ENCODE measurements at regions of chr19 and their contacts with region 1.

Region 1: DNA sequence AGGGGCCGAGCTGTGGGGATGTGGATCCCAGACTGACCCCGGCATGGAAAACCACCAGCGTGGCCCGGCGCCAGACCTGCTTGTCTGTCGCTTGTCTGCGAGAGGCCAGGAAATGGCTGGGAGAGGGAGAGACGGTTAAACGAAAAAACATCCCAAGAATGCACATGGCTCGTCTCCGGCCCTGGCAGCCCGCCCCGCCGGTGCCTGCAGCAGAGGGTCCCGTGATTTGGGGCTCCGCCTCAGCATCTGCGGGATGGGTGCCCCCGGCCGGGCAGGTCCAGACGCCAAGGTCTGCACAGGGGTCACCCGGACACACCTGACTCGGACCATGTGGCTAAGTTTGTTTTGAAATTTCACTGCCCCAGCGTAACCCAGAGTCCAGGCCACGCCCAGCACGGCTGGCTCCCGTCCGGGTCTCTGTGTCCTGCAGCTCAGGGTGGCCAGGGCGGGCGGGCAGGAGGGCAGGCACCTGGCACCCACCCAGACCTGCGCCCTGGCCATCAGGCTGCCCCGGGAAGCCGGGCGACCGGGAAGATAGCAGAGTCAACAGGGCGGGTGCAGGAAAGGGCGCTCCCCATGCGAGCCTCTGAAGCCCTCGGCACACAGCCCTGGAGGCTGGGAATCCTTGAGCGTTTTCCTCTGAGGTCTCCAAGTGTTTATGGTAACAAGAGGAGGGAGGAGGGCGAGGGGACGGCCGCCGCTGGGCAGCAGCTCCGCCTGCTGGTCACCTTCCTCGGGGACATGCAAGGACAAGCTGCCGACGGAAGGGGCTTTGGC is 103.2 kb downstream of the GADD45B start:
- DNase-seq: peak; percentile 90
- H3K4me3 ChIP-seq: peak overlapping the region; percentile 46 to 75
- H3K27ac ChIP-seq: peak overlapping the region; percentile 74 to 86
- H3K4me1 ChIP-seq: peaks cover 7 to 12% of the 10 kb centered on the region in 2 experiments; a peak in 3 of 4 replicates
- H3K27me3 ChIP-seq: no peaks in the 10 kb centered on the region
- CTCF ChIP-seq: peak; percentile 90
- EP300 ChIP-seq: peak in 1 of 2 experiments; percentile 85; a peak in 2 of 4 replicates
- RAD21 ChIP-seq: peak; percentile 84

Region 2: GRCh38 chr19:2261438-2262172 is 317.5 kb before region 1 on chr19:
- CTCF ChIA-PET with region 1: no interaction called
- POLR2A ChIA-PET with region 1: no interaction called
- DNase-seq: peak; percentile 49
- H3K4me3 ChIP-seq: no peak overlapping the region; a peak in 1 of 4 replicates
- H3K27ac ChIP-seq: no peak overlapping the region
- H3K4me1 ChIP-seq: peaks cover 0 to 3% of the 10 kb centered on the region in 2 experiments; a peak in 1 of 4 replicates
- H3K27me3 ChIP-seq: no peaks in the 10 kb centered on the region
- CTCF ChIP-seq: peak; percentile 67
- EP300 ChIP-seq: no peak
- RAD21 ChIP-seq: peak; percentile 56

Region 3: GRCh38 chr19:2488942-2489731 is 90.0 kb before region 1 on chr19:
- CTCF ChIA-PET with region 1: interaction called, 11 read pairs
- POLR2A ChIA-PET with region 1: no interaction called
- DNase-seq: peak; percentile 92
- H3K4me3 ChIP-seq: peak overlapping the region; percentile 42 to 52
- H3K27ac ChIP-seq: no peak overlapping the region
- H3K4me1 ChIP-seq: peaks cover 9 to 16% of the 10 kb centered on the region in 2 experiments; a peak in 3 of 4 replicates
- H3K27me3 ChIP-seq: no peaks in the 10 kb centered on the region
- CTCF ChIP-seq: no peak
- EP300 ChIP-seq: no peak
- RAD21 ChIP-seq: no peak

Region 4: DNA sequence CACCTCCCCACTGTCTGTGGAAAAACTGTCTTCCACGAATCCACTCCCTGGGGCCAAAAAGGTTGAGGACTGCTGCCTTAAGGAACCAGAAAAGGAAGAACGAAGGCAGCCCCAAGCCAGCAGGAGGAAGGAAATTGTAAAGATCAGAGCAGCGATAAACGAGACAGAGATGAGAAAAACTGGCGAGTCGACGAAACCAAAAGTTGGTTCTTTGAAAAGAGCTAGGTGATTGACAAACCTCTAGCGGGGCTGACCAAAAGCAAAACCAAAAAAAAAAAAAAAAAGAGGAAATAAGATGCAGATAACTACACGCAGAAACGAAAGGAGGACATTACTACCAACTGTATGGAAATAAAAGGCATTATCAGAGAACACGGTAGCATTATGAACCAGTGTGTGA is 26.2 kb before region 1 on chr19:
- CTCF ChIA-PET with region 1: interaction called, 12 read pairs
- POLR2A ChIA-PET with region 1: no interaction called
- DNase-seq: no peak
- H3K4me3 ChIP-seq: peak overlapping the region; percentile 37 to 60; a peak in 3 of 4 replicates
- H3K27ac ChIP-seq: peak overlapping the region; percentile 31 to 35; a peak in 3 of 4 replicates
- H3K4me1 ChIP-seq: peaks cover 0 to 4% of the 10 kb centered on the region in 2 experiments; a peak in 1 of 4 replicates
- H3K27me3 ChIP-seq: no peaks in the 10 kb centered on the region
- CTCF ChIP-seq: no peak
- EP300 ChIP-seq: no peak
- RAD21 ChIP-seq: no peak

Region 5: DNA sequence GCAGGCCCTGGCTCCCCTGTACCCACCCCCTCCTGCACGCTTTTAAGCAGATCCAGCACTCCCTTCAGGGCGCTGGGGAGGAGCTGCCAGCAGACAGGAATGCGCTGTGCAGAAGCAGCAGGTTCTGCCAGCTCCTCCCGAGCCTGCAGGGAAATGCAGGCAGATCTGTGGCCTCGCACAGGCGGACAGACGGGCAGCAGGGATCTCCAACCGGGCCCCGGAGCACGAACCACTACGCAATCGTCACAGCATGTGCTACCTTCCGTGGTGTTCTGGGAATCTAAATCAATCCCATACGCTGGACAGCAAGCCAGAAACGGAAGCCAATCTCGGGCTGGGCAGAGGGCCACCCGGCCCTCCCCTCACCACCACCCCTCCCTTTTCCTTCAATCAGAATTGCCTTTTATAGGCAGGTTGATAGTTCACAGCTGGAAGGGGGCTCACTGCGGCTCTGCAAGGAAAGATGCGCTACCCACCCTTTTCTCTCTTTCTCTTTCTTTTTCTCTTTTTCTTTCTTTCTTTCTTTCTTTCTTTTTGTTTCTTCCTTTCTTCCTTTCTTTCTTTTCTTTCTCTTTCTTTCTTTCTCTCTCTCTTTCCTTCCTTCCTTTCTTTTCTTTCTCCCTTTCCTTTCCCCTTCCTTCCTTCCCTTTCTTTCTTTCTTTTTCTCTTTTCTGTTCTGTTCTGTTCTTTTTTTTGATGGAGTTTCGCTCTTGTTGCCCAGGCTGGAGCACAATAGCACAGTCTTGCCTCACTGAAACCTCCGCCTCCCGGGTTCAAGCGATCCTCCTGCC is 23.5 kb after region 1 on chr19:
- CTCF ChIA-PET with region 1: interaction called, 11 read pairs
- POLR2A ChIA-PET with region 1: no interaction called
- DNase-seq: peak; percentile 87
- H3K4me3 ChIP-seq: peak overlapping the region in 1 of 2 experiments; percentile 26; a peak in 2 of 4 replicates
- H3K27ac ChIP-seq: peak overlapping the region; percentile 47 to 55
- H3K4me1 ChIP-seq: peaks cover 6 to 7% of the 10 kb centered on the region in 2 experiments; a peak in 2 of 4 replicates
- H3K27me3 ChIP-seq: no peaks in the 10 kb centered on the region
- CTCF ChIP-seq: no peak
- EP300 ChIP-seq: peak; percentile 35 to 71; a peak in 1 of 4 replicates
- RAD21 ChIP-seq: no peak

Region 6: GRCh38 chr19:2702162-2703076 is 123.3 kb after region 1 on chr19 and contains the start of gene GNG7:
- CTCF ChIA-PET with region 1: no interaction called
- POLR2A ChIA-PET with region 1: no interaction called
- DNase-seq: peak; percentile 100
- H3K4me3 ChIP-seq: peak within 1 kb of the TSS; percentile 59 to 65
- H3K27ac ChIP-seq: no peak within 1 kb of the TSS; a peak in 1 of 4 replicates
- H3K4me1 ChIP-seq: peaks cover 0 to 5% of the 10 kb centered on the region in 2 experiments; a peak in 1 of 4 replicates
- H3K27me3 ChIP-seq: no peaks in the 10 kb centered on the region; the same call in 1 of the 2 replicates
- CTCF ChIP-seq: no peak
- EP300 ChIP-seq: no peak
- RAD21 ChIP-seq: no peak
- polyA plus RNA-seq, gene GNG7: 1.6 and 2.2 TPM in 2 replicates

Measured in SK-N-SH (cell line).